ENCODE measurements at regions of chr19 and their contacts with region 1.

Region 1: DNA sequence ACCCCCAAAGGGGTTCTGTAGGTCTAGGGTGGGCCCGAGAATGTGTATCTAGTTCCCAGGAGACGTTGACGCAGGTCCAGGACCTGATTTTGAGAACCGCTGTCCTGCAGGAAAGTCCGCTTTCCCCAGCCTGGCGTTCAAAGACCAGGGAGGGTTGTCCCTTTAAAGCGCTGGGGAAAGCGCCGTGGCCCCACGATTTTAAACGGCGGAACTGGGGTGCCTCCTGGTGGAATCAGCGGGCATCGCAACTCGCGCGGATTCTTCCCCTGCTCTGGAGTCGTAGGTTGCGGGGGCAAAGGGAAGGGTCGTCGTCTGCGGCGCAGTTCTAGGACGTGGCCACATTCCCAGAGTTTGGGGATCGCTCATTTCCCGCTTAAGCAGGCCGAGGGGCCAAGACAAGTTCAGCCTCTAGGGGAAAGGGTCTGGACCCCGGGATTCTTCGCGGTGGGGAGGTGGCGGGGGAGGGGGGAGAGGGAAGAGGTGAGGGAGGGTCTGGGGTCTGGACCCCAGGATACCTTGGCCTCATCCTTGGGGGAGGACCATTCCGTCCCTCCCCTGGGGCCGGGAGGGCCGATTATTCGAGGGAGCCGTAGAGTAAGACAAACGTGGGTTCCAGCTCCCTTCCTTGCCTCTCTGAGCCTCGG is 7.7 kb downstream of the PNMA8B start:
- DNase-seq: peak; percentile 60 to 71 (median 61)
- H3K4me3 ChIP-seq: no peak overlapping the region
- H3K4me3 Mint-ChIP-seq: peak overlapping the region in 1 of 8 donors; percentile 63
- H3K27ac ChIP-seq: no peak overlapping the region
- H3K27ac Mint-ChIP-seq: no peak overlapping the region
- H3K4me1 ChIP-seq: peaks cover 20% of the 10 kb centered on the region
- H3K4me1 Mint-ChIP-seq: peaks cover 9 to 57% (median 12%) of the 10 kb centered on the region in 4 donors
- H3K27me3 ChIP-seq: peaks cover 39% of the 10 kb centered on the region
- H3K27me3 Mint-ChIP-seq: peaks cover 45 to 60% of the 10 kb centered on the region in 2 donors

Region 2: GRCh38 chr19:46022431-46023310 is 465.3 kb before region 1 on chr19 and contains the start of gene PGLYRP1:
- CTCF ChIA-PET with region 1: no interaction called
- POLR2A ChIA-PET with region 1: no interaction called
- intact Hi-C with region 1: loop called (anchors 5 kb)
- DNase-seq: no peak
- H3K4me3 ChIP-seq: no peak within 1 kb of the TSS
- H3K4me3 Mint-ChIP-seq: no peak within 1 kb of the TSS
- H3K27ac ChIP-seq: no peak within 1 kb of the TSS
- H3K27ac Mint-ChIP-seq: peak within 1 kb of the TSS in 1 of 7 donors; percentile 25
- H3K4me1 ChIP-seq: peaks cover 11% of the 10 kb centered on the region
- H3K4me1 Mint-ChIP-seq: peaks cover 10 to 21% (median 14%) of the 10 kb centered on the region in 4 donors
- H3K27me3 ChIP-seq: peaks cover 4% of the 10 kb centered on the region
- H3K27me3 Mint-ChIP-seq: peaks cover 5 to 13% of the 10 kb centered on the region in 2 donors
- total RNA-seq, gene PGLYRP1: not detected

Region 3: DNA sequence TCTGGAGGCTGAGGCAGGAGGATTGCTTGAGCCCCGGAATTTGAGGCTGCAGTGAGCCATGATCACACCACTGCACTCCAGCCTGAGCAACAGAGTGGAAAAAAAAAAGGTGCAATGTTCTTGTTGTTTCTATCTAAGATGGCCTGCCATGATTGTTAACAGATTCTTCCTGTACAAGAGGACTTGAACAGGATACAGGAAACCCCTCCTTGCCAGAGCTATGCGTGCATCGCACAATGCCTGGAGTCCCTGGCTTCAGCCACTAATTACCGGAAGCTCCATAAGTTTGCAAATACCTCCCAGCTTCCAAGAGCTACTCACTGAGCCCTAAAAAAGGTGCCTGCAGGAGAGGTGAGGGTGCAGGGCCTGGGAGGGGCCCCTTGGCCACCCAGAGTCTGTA is 204.2 kb before region 1 on chr19:
- CTCF ChIA-PET with region 1: interaction called, 12 read pairs
- POLR2A ChIA-PET with region 1: no interaction called
- intact Hi-C with region 1: no loop called
- DNase-seq: no peak
- H3K4me3 ChIP-seq: no peak overlapping the region
- H3K4me3 Mint-ChIP-seq: no peak overlapping the region
- H3K27ac ChIP-seq: no peak overlapping the region
- H3K27ac Mint-ChIP-seq: no peak overlapping the region
- H3K4me1 ChIP-seq: no peaks in the 10 kb centered on the region
- H3K4me1 Mint-ChIP-seq: peaks cover 0 to 3% (median under 1%) of the 10 kb centered on the region in 4 donors
- H3K27me3 ChIP-seq: no peaks in the 10 kb centered on the region
- H3K27me3 Mint-ChIP-seq: peaks cover 4 to 10% of the 10 kb centered on the region in 2 donors

Region 4: GRCh38 chr19:46392243-46392801 is 95.6 kb before region 1 on chr19:
- CTCF ChIA-PET with region 1: interaction called, 11 read pairs
- POLR2A ChIA-PET with region 1: no interaction called
- intact Hi-C with region 1: loop called (anchors 1 kb)
- DNase-seq: no peak
- H3K4me3 ChIP-seq: no peak overlapping the region
- H3K4me3 Mint-ChIP-seq: no peak overlapping the region
- H3K27ac ChIP-seq: no peak overlapping the region
- H3K27ac Mint-ChIP-seq: peak overlapping the region in 2 of 7 donors; percentile 46 to 64
- H3K4me1 ChIP-seq: no peaks in the 10 kb centered on the region
- H3K4me1 Mint-ChIP-seq: peaks cover 3 to 10% (median 4%) of the 10 kb centered on the region in 4 donors
- H3K27me3 ChIP-seq: no peaks in the 10 kb centered on the region
- H3K27me3 Mint-ChIP-seq: peaks cover 0 to 2% of the 10 kb centered on the region in 2 donors

Region 5: DNA sequence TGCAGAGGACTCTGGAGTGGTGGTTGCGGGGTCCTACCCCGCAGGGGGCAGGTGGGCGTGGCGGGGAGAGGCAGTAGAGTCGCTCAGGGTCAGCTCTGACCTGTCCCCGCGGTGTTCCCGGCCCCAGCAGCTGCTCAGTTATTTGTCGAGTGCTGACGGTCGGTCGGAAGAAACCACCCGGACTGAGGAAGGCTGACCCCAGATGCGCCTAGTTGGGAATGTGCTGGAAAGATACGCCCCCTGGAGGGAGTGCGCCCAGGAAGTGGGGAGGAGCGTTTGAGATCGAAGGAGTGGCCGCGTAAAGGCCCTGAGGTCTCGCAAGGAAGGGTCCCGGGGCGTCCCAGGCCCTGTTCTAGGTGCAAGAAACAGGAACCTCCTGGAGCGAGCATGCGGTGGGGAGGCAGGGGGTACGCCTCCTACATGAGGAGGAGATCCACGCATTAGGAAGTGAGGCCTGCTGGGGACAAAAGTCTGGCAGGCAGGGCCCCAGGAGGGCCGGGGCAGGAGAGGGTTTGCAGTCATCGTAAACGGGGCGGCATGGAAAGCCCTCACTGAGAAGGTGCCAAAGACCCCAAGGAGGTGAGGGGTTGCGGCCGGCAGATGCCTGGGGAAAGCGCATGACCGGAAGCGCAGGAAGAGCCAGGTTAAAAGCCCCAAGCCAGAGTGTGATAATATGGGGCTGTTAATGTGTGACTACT is 83.7 kb before region 1 on chr19:
- CTCF ChIA-PET with region 1: interaction called, 17 read pairs
- POLR2A ChIA-PET with region 1: no interaction called
- intact Hi-C with region 1: loop called (anchors 1 kb)
- DNase-seq: no peak
- H3K4me3 ChIP-seq: no peak overlapping the region
- H3K4me3 Mint-ChIP-seq: peak overlapping the region; percentile 12 to 86 (median 64)
- H3K27ac ChIP-seq: no peak overlapping the region
- H3K27ac Mint-ChIP-seq: no peak overlapping the region
- H3K4me1 ChIP-seq: peaks cover 15% of the 10 kb centered on the region
- H3K4me1 Mint-ChIP-seq: peaks cover 14 to 29% (median 19%) of the 10 kb centered on the region in 4 donors
- H3K27me3 ChIP-seq: peaks cover 32% of the 10 kb centered on the region
- H3K27me3 Mint-ChIP-seq: peaks cover 44 to 59% of the 10 kb centered on the region in 2 donors

Region 6: GRCh38 chr19:46529622-46530462 is 41.9 kb after region 1 on chr19:
- CTCF ChIA-PET with region 1: no interaction called
- POLR2A ChIA-PET with region 1: no interaction called
- intact Hi-C with region 1: no loop called
- DNase-seq: peak; percentile 62 to 75 (median 70)
- H3K4me3 ChIP-seq: no peak overlapping the region
- H3K4me3 Mint-ChIP-seq: peak overlapping the region in 2 of 8 donors; percentile 18 to 22
- H3K27ac ChIP-seq: no peak overlapping the region
- H3K27ac Mint-ChIP-seq: peak overlapping the region in 3 of 7 donors; percentile 29 to 66 (median 37)
- H3K4me1 ChIP-seq: peaks cover 14% of the 10 kb centered on the region
- H3K4me1 Mint-ChIP-seq: peaks cover 10 to 21% (median 13%) of the 10 kb centered on the region in 4 donors
- H3K27me3 ChIP-seq: no peaks in the 10 kb centered on the region
- H3K27me3 Mint-ChIP-seq: peaks cover 0 to 2% of the 10 kb centered on the region in 2 donors

Region 7: GRCh38 chr19:46579361-46579879 is 91.5 kb after region 1 on chr19:
- CTCF ChIA-PET with region 1: no interaction called
- POLR2A ChIA-PET with region 1: no interaction called
- intact Hi-C with region 1: no loop called
- DNase-seq: peak in 4 of 5 donors; percentile 25 to 58 (median 36)
- H3K4me3 ChIP-seq: no peak overlapping the region
- H3K4me3 Mint-ChIP-seq: no peak overlapping the region
- H3K27ac ChIP-seq: no peak overlapping the region
- H3K27ac Mint-ChIP-seq: peak overlapping the region in 4 of 7 donors; percentile 57 to 80 (median 64)
- H3K4me1 ChIP-seq: peaks cover 4% of the 10 kb centered on the region
- H3K4me1 Mint-ChIP-seq: peaks cover 5 to 22% (median 14%) of the 10 kb centered on the region in 4 donors
- H3K27me3 ChIP-seq: no peaks in the 10 kb centered on the region
- H3K27me3 Mint-ChIP-seq: no peaks in the 10 kb centered on the region

Region 8: GRCh38 chr19:47122359-47123335 is 634.7 kb after region 1 on chr19:
- CTCF ChIA-PET with region 1: no interaction called
- POLR2A ChIA-PET with region 1: no interaction called
- intact Hi-C with region 1: no loop called
- DNase-seq: no peak
- H3K4me3 ChIP-seq: no peak overlapping the region
- H3K4me3 Mint-ChIP-seq: no peak overlapping the region
- H3K27ac ChIP-seq: no peak overlapping the region
- H3K27ac Mint-ChIP-seq: no peak overlapping the region
- H3K4me1 ChIP-seq: no peaks in the 10 kb centered on the region
- H3K4me1 Mint-ChIP-seq: peaks cover 3 to 6% (median 6%) of the 10 kb centered on the region in 4 donors
- H3K27me3 ChIP-seq: no peaks in the 10 kb centered on the region
- H3K27me3 Mint-ChIP-seq: no peaks in the 10 kb centered on the region